Left ventricle myocardium superior (tissue), 1 donor: ENCODE measurements at regions of chr15 and their contacts with region 1.

Region 1: DNA sequence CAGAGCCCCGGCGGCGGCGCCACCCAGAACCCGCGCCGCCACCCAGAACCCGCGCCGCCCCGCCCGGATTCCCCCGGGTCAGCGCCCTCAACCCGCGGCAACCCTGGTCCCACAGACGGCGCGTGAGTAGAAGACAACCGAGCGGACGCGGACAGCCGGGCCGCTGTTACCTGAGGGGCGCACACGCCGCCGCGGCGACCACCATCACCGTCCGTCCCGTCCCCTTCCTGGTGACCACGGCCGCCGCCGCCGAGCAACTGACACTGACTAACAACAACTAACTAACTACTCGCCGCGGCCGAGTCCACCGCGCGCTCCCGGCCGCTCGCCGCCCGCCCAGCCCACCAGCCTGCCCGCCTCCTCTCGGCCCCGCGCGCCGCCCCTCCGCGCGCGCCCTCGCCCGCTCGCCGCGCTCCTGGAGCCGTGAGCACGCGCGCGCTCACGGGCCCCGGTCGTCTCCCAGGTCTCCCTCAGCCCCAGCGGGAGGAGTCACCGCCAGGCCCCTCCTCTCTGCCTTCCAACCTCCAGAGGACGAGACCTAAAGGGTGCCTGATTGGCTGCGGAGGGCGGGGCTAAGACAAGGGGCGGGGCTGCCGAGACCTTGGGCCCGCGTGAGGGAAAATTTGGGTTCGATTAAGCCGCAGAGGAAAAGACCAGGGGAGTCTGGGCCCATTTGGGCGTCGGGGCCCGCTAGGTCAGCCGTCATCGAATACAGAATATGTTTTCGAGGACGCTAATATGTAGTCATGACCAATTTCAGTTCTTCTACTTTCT is at the start of gene PEAK1:
- DNase-seq: peak; percentile 100
- ATAC-seq: peak; percentile 96
- total RNA-seq, gene PEAK1: 67.4 TPM

Region 2: GRCh38 chr15:77126529-77127326 is 293.3 kb before region 1 on chr15:
- intact Hi-C with region 1: loop called (anchors 10 kb)
- DNase-seq: no peak
- ATAC-seq: peak; percentile 87